ENCODE measurements at regions of chr3 and their contacts with region 1.

Region 1: DNA sequence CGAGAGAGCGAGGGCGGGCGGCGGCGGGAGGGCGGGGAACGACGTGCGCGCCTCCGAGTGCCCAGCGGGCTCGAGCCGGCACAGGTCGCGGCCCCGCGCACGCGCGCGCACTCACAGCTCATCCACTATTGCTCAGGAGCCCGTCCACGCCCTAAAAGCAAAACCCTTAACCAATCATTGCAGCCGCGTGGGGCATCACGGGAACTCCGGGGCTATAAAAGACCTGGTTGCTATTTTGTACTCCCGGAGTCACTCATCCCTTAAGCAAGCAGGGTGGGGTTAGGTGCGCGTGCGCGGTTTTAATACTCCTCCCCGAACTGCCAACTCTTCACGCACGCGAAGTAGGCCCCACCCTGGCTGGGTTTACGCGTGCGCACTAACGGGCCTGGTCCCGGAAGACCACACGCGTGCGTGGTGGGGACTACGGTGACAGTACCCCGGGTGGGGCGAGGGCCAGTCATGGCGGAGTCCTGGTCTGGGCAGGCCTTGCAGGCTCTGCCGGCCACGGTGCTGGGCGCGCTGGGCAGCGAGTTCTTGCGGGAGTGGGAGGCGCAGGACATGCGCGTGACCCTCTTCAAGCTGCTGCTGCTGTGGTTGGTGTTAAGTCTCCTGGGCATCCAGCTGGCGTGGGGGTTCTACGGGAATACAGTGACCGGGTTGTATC is at the starts of genes RHOA and TCTA:
- DNase-seq: peak; percentile 100
- ATAC-seq: peak; percentile 77
- H3K4me3 ChIP-seq: peak within 1 kb of the TSS; percentile 74 to 96 (median 90)
- H3K4me3 Mint-ChIP-seq: peak within 1 kb of the TSS; percentile 96
- H3K27ac ChIP-seq: peak within 1 kb of the TSS; percentile 90 to 97
- H3K27ac Mint-ChIP-seq: peak within 1 kb of the TSS; percentile 96
- H3K4me1 ChIP-seq: peaks cover 71 to 83% of the 10 kb centered on the region in 2 donors
- H3K4me1 Mint-ChIP-seq: peaks cover 74% of the 10 kb centered on the region
- H3K27me3 ChIP-seq: no peaks in the 10 kb centered on the region
- H3K27me3 Mint-ChIP-seq: no peaks in the 10 kb centered on the region
- CTCF ChIP-seq: no peak
- total RNA-seq, gene RHOA: 298 and 306 TPM in 2 replicates
- total RNA-seq, gene TCTA: 46.4 and 49.3 TPM in 2 replicates

Region 2: DNA sequence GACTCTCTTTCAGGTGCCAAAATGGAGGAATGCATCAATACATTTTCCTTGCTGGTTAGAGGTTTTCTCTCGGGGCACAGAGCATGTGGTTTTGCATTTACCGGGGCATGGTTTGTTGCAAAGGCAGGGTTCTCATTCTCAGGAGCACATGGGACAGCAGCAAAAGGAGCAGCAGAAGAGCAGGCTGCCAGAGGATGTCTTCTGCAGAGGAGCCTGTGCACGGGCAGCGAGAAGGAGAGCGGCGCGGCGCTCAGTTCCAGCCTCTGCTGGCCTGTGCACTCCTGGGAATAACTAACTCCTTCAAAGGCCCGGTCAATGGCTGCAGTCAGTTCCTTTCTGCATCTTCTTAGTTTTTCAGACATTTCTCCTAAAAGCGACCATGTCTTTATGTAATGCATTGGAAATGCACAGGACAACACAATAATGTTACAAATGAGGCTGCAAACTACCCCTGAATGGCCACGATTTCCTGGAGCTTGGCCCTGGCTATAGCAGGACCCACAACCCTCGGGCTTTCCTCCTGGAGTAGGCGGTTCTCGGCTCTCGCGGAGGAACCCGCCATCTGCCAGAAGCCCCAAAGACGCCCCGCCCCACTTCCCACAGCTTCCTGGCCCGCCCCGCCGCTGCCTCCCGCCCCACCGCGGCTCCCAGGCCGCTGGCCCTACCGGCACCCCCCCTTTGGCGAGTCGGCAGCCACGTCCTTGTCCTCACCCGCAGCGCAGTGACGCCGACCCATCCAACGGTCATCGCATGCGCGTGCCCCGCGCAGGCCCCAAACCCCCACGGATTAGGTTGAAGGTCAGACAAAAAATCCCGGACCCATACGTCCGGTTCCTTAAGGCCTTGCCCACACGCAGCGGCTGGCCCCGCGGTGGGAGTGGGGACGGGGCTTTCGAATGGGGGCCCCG is 135.4 kb before region 1 on chr3 and contains the start of gene C3orf62:
- CTCF ChIA-PET with region 1: no interaction called
- POLR2A ChIA-PET with region 1: no interaction called
- intact Hi-C with region 1: no loop called
- DNase-seq: peak; percentile 67
- ATAC-seq: peak; percentile 94
- H3K4me3 ChIP-seq: peak within 1 kb of the TSS; percentile 24 to 63 (median 58)
- H3K4me3 Mint-ChIP-seq: peak within 1 kb of the TSS; percentile 92
- H3K27ac ChIP-seq: peak within 1 kb of the TSS; percentile 80 to 89
- H3K27ac Mint-ChIP-seq: peak within 1 kb of the TSS; percentile 95
- H3K4me1 ChIP-seq: peaks cover 10 to 15% of the 10 kb centered on the region in 2 donors
- H3K4me1 Mint-ChIP-seq: peaks cover 21% of the 10 kb centered on the region
- H3K27me3 ChIP-seq: no peaks in the 10 kb centered on the region
- H3K27me3 Mint-ChIP-seq: no peaks in the 10 kb centered on the region
- CTCF ChIP-seq: no peak
- total RNA-seq, gene C3orf62: 7.8 and 10.4 TPM in 2 replicates

Region 3: DNA sequence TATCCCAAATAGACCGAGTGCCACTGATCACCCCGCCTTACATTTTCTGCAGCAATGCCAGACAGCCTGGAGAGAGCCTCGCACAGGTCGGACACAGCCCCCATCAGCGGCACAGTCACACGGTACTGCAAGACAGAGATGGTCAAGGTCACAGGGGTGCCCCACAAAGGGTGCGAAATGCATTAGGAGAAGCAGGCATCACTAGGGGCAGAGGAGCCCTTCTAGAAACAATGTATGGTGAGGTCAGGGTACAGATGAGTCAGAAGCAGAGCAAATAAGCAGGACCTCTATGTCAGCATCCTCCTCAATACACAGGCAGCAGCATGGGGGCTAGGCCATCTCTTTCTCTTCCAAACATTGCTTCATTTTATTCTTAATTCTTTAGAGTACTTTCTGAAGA is 113.6 kb before region 1 on chr3:
- CTCF ChIA-PET with region 1: no interaction called
- POLR2A ChIA-PET with region 1: no interaction called
- intact Hi-C with region 1: no loop called
- DNase-seq: no peak
- ATAC-seq: no peak
- H3K4me3 ChIP-seq: no peak overlapping the region
- H3K4me3 Mint-ChIP-seq: no peak overlapping the region
- H3K27ac ChIP-seq: no peak overlapping the region
- H3K27ac Mint-ChIP-seq: no peak overlapping the region
- H3K4me1 ChIP-seq: no peaks in the 10 kb centered on the region
- H3K4me1 Mint-ChIP-seq: no peaks in the 10 kb centered on the region
- H3K27me3 ChIP-seq: no peaks in the 10 kb centered on the region
- H3K27me3 Mint-ChIP-seq: no peaks in the 10 kb centered on the region
- CTCF ChIP-seq: no peak

Region 4: GRCh38 chr3:49358217-49358883 is 53.8 kb before region 1 on chr3 and contains the start of gene GPX1:
- CTCF ChIA-PET with region 1: no interaction called
- POLR2A ChIA-PET with region 1: interaction called, 25 read pairs
- intact Hi-C with region 1: no loop called
- DNase-seq: peak; percentile 83
- ATAC-seq: peak; percentile 80
- H3K4me3 ChIP-seq: peak within 1 kb of the TSS; percentile 59 to 83 (median 77)
- H3K4me3 Mint-ChIP-seq: peak within 1 kb of the TSS; percentile 93
- H3K27ac ChIP-seq: peak within 1 kb of the TSS; percentile 59 to 85
- H3K27ac Mint-ChIP-seq: peak within 1 kb of the TSS; percentile 97
- H3K4me1 ChIP-seq: peaks cover 14 to 38% of the 10 kb centered on the region in 2 donors
- H3K4me1 Mint-ChIP-seq: peaks cover 28% of the 10 kb centered on the region
- H3K27me3 ChIP-seq: no peaks in the 10 kb centered on the region
- H3K27me3 Mint-ChIP-seq: no peaks in the 10 kb centered on the region
- CTCF ChIP-seq: no peak
- total RNA-seq, gene GPX1: 64.7 and 79.5 TPM in 2 replicates

Region 5: DNA sequence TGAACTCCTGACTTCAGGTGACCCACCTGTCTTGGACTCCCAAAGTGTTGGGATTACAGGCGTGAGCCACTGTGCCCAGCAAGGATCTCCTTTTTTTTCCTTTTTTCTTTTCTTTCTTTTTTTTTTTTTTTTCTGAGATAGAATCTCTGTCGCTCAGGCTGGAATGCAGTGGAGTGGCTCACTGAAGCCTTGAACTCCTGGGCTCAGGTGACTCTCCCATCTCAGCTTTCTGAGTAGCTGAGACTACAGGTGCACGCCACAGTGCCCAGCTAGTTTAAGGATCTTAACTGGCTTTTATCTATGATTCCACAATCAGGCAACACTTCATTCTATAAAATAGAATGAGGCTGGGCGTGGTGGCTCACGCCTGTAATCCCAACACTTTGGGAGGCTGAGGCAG is 33.3 kb after region 1 on chr3:
- CTCF ChIA-PET with region 1: interaction called, 21 read pairs
- POLR2A ChIA-PET with region 1: interaction called, 9 read pairs
- intact Hi-C with region 1: loop called (anchors 1 kb)
- DNase-seq: no peak
- ATAC-seq: no peak
- H3K4me3 ChIP-seq: no peak overlapping the region
- H3K4me3 Mint-ChIP-seq: no peak overlapping the region
- H3K27ac ChIP-seq: no peak overlapping the region
- H3K27ac Mint-ChIP-seq: peak overlapping the region; percentile 26
- H3K4me1 ChIP-seq: peaks cover 18 to 27% of the 10 kb centered on the region in 2 donors
- H3K4me1 Mint-ChIP-seq: peaks cover 15% of the 10 kb centered on the region
- H3K27me3 ChIP-seq: no peaks in the 10 kb centered on the region
- H3K27me3 Mint-ChIP-seq: no peaks in the 10 kb centered on the region
- CTCF ChIP-seq: no peak